PC-3 (cell line): ENCODE measurements at regions of chr6 and their contacts with region 1.

Region 1: DNA sequence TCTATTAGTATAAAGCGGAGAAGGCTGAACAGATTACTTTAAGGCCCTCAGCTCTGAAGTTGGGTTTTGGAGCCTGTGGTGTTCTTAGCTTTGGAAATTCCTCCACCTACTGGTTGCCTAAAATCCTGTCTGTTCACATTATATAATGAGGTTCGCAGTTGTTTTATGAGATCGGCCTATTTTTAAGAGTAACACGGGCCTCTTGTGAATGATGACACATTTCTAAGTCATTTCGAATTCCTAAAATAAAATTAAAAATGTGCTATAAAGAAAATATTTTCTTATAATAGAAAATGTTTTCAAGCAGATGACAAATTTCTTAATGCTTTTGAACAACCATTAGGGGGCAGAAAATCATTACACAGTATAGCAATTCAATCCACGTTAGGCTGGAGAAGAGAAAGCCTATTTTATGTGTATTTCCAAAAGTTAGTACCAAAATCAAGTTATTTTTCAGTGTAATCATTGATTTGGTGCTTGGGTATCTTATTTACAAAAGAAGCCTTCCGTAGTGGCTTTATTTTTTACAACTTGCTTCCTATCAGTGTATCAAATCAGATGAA is 15.8 kb upstream of the FAM8A1 start:
- DNase-seq: peak; percentile 75
- ATAC-seq: peak; percentile 75
- H3K4me3 ChIP-seq: peak overlapping the region; percentile 15; the same call in 1 of the 2 replicates
- H3K27ac ChIP-seq: no peak overlapping the region
- H3K4me1 ChIP-seq: peaks cover 9% of the 10 kb centered on the region
- H3K27me3 ChIP-seq: no peaks in the 10 kb centered on the region
- CTCF ChIP-seq: peak; percentile 96

Region 2: GRCh38 chr6:17281100-17281494 is 303.2 kb before region 1 on chr6 and contains the start of gene RBM24:
- CTCF ChIA-PET with region 1: no interaction called
- POLR2A ChIA-PET with region 1: no interaction called
- intact Hi-C with region 1: loop called (anchors 1 kb)
- DNase-seq: peak; percentile 78
- ATAC-seq: peak; percentile 65
- H3K4me3 ChIP-seq: peak within 1 kb of the TSS; percentile 88
- H3K27ac ChIP-seq: no peak within 1 kb of the TSS
- H3K4me1 ChIP-seq: peaks cover 32% of the 10 kb centered on the region
- H3K27me3 ChIP-seq: no peaks in the 10 kb centered on the region
- CTCF ChIP-seq: peak; percentile 36; the same call in 1 of the 2 replicates
- total RNA-seq, gene RBM24: 2.0 and 3.2 TPM in 2 replicates

Region 3: DNA sequence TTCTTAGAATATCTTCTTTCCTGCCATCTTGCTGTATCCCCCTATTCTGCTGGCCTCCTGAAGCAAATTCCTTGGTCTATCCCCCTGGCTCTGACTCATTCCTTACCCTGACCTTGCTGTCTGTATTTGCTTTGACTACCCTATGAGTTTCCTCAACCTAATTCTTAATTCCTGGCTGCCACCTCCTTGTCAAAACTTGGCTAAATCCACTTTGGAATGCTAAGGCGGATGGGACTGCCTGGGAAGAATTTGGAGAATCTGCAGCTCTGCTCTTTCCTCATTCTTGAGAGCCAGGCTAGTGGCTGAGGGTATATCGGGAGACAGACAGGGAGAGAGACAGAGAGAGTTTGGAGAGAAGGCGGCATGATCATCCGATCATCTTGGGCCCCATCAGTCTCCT is 166.5 kb before region 1 on chr6:
- CTCF ChIA-PET with region 1: no interaction called
- POLR2A ChIA-PET with region 1: no interaction called
- intact Hi-C with region 1: loop called (anchors 1 kb)
- DNase-seq: peak; percentile 95
- ATAC-seq: peak; percentile 74
- H3K4me3 ChIP-seq: peak overlapping the region; percentile 41
- H3K27ac ChIP-seq: peak overlapping the region; percentile 83
- H3K4me1 ChIP-seq: peaks cover 45% of the 10 kb centered on the region
- H3K27me3 ChIP-seq: no peaks in the 10 kb centered on the region
- CTCF ChIP-seq: no peak

Region 4: DNA sequence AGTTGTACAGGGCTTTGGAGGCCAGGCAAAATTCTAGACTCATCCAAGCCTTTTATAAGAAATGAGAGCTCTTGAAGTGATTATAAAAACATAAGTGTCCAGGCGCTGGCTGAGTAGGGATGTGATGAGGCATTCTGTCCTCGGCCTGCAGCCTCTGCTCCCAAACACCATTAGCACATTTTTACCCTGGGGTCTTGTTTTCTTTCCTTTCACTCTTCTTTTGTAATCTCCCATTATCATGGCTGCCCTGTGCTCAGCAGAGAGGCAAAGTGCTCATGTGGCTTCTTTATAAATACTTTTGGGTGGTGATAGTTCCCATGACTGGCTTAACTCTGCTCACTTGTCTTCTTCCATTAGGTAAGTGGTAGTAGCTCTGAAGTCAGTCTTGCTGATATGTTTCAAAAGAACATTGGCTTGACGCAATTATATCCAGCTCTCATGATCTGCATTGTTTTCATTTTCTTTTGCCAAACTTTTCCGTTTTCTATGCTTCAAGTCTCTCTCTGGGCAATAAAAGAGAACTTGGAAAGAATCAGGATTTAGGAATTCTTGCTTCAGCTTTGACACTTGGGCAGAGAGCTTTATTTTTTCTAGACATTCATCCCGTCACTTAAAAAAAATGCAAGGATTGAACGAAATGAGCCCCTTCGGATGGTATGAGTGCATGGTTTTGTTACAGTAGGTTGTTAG is 129.9 kb before region 1 on chr6:
- CTCF ChIA-PET with region 1: no interaction called
- POLR2A ChIA-PET with region 1: no interaction called
- intact Hi-C with region 1: no loop called
- DNase-seq: no peak
- ATAC-seq: no peak
- H3K4me3 ChIP-seq: no peak overlapping the region
- H3K27ac ChIP-seq: no peak overlapping the region
- H3K4me1 ChIP-seq: no peaks in the 10 kb centered on the region
- H3K27me3 ChIP-seq: no peaks in the 10 kb centered on the region
- CTCF ChIP-seq: no peak

Region 5: DNA sequence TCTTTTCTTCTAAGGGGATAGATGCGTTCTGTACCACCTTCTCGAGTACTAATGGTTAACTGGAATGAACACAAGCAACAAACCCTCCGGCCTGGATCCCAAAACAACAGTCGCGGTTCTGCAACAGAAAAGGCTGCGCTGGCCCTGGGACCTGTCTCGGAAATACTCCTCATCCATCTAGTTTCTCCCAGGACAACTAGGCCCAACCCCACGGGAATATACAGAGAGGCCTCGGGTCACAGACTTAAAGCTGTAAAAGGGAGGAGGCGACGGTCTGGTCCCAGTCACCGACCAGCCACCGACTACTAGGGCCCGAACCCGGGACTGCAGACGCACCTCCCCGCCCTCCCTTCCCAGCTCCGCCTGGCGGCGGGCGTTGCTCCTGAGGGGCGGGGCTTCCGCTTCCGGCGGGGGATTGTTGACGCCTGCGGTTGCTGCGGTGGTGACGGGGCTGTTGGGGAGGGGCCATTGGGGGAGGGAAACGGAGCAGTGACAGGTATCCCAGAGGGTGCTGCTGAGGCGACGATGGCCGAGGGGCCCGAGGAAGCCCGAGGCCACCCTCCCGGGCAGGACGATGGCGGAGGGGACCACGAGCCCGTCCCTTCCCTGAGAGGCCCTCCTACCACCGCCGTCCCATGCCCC is 15.7 kb after region 1 on chr6 and contains the start of gene FAM8A1:
- CTCF ChIA-PET with region 1: interaction called, 23 read pairs
- POLR2A ChIA-PET with region 1: interaction called, 3 read pairs
- intact Hi-C with region 1: no loop called
- DNase-seq: peak; percentile 94
- ATAC-seq: peak; percentile 88
- H3K4me3 ChIP-seq: peak within 1 kb of the TSS; percentile 71
- H3K27ac ChIP-seq: no peak within 1 kb of the TSS
- H3K4me1 ChIP-seq: peaks cover 9% of the 10 kb centered on the region; the same call in 1 of the 2 replicates
- H3K27me3 ChIP-seq: no peaks in the 10 kb centered on the region
- CTCF ChIP-seq: 0 out of 2 replicates have a peak, but pooled peaks have one; percentile 19
- total RNA-seq, gene FAM8A1: 8.5 and 9.0 TPM in 2 replicates